Heart right ventricle (tissue), 16 donors: ENCODE measurements at regions of chr21 and their contacts with region 1.

Region 1: GRCh38 chr21:43956670-43957035 is 55.5 kb upstream of the TRAPPC10 start:
- DNase-seq: no peak
- ATAC-seq: peak; percentile 9 to 75 (median 46)
- H3K4me3 ChIP-seq: no peak overlapping the region
- H3K27ac ChIP-seq: peak overlapping the region in 2 of 10 donors; percentile 40 to 49
- H3K4me1 ChIP-seq: peaks cover 0 to 38% (median 26%) of the 10 kb centered on the region in 9 donors
- H3K27me3 ChIP-seq: no peaks in the 10 kb centered on the region
- CTCF ChIP-seq: no peak

Region 2: DNA sequence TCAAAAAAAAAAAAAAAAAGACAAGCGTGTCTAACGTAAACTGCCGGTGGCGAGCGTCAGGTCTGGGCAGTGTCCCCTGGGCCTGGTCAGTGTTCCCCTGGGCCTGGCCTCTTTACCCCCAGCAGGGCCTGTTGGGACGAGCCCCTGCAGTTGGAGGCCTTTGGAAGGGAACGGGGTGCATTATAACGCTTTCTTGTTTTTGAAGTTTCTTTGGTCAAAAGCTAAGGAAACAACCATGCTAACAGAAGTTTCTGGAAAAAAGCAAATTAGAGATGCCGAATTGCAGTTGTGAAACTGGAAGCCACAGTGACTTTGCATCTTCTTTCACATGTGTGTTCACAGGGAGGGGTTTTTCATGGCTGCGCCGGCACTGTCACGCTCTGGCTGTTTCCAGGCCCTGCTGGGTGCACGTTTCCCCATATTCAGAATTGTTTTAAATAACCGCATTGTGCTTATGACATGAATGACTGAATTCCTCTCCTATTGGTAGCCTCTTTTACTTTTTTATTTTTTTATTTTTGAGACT is 151.3 kb before region 1 on chr21:
- intact Hi-C with region 1: loop called in 1 of 10 experiments (anchors 5 kb)
- DNase-seq: no peak
- ATAC-seq: no peak
- H3K4me3 ChIP-seq: no peak overlapping the region
- H3K27ac ChIP-seq: peak overlapping the region in 1 of 10 donors; percentile 66
- H3K4me1 ChIP-seq: peaks cover 0 to 19% (median 0%) of the 10 kb centered on the region in 9 donors
- H3K27me3 ChIP-seq: no peaks in the 10 kb centered on the region
- CTCF ChIP-seq: no peak

Region 3: GRCh38 chr21:43916691-43917514 is 39.8 kb before region 1 on chr21:
- intact Hi-C with region 1: no loop called
- DNase-seq: no peak
- ATAC-seq: peak; percentile 28 to 65 (median 45)
- H3K4me3 ChIP-seq: peak overlapping the region in 8 of 10 donors; percentile 1 to 47 (median 34)
- H3K27ac ChIP-seq: peak overlapping the region in 1 of 10 donors; percentile 64
- H3K4me1 ChIP-seq: peaks cover 6 to 66% (median 34%) of the 10 kb centered on the region in 9 donors
- H3K27me3 ChIP-seq: no peaks in the 10 kb centered on the region
- CTCF ChIP-seq: no peak